Dendritic cell treated with granulocyte-macrophage colony-stimulating factor and Interleukin-4, amounts not matched to agents 40 ng/mL and 50 ng/mL, for 4 days (primary cell): ENCODE measurements at regions of chr2 and their contacts with region 1.

Region 1: DNA sequence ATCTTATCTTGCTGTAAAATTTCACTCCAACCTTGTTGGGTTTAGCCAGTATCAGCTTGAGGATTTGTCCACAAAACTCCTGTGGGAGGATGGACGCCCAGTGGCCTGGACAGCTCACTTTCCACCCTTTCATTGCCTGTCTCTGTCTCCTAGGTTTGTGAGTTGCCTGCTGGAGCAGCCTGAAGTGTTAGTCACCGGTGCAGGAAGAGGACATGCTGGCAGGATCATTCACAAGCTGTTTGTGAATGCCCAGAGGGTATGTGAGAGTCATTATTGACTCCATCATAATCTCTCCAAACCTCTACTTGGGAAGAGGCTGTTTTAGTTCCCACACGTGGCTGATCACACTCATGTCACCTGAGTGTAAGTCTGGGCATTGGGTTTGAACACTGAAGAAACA is 112.3 kb downstream of the RAB3GAP1 start:
- H3K4me3 Mint-ChIP-seq: no peak overlapping the region
- H3K27ac Mint-ChIP-seq: no peak overlapping the region
- H3K4me1 Mint-ChIP-seq: no peaks in the 10 kb centered on the region
- H3K27me3 Mint-ChIP-seq: no peaks in the 10 kb centered on the region

Region 2: GRCh38 chr2:135037831-135038230 is 126.6 kb before region 1 on chr2:
- intact Hi-C with region 1: no loop called
- H3K4me3 Mint-ChIP-seq: no peak overlapping the region
- H3K27ac Mint-ChIP-seq: no peak overlapping the region
- H3K4me1 Mint-ChIP-seq: no peaks in the 10 kb centered on the region
- H3K27me3 Mint-ChIP-seq: peaks cover 1% of the 10 kb centered on the region

Region 3: GRCh38 chr2:135052042-135052876 is 112.2 kb before region 1 on chr2 and contains the start of gene RAB3GAP1:
- intact Hi-C with region 1: no loop called
- H3K4me3 Mint-ChIP-seq: peak within 1 kb of the TSS; percentile 96
- H3K27ac Mint-ChIP-seq: peak within 1 kb of the TSS; percentile 100
- H3K4me1 Mint-ChIP-seq: peaks cover 28% of the 10 kb centered on the region
- H3K27me3 Mint-ChIP-seq: no peaks in the 10 kb centered on the region

Region 4: GRCh38 chr2:135756692-135757091 is 592.3 kb after region 1 on chr2:
- intact Hi-C with region 1: loop called (anchors 10 kb)
- H3K4me3 Mint-ChIP-seq: no peak overlapping the region
- H3K27ac Mint-ChIP-seq: no peak overlapping the region
- H3K4me1 Mint-ChIP-seq: no peaks in the 10 kb centered on the region
- H3K27me3 Mint-ChIP-seq: no peaks in the 10 kb centered on the region

Region 5: GRCh38 chr2:135785032-135785431 is 620.6 kb after region 1 on chr2:
- intact Hi-C with region 1: loop called (anchors 10 kb)
- H3K4me3 Mint-ChIP-seq: no peak overlapping the region
- H3K27ac Mint-ChIP-seq: no peak overlapping the region
- H3K4me1 Mint-ChIP-seq: no peaks in the 10 kb centered on the region
- H3K27me3 Mint-ChIP-seq: no peaks in the 10 kb centered on the region